ENCODE measurements at regions of chr6 and their contacts with region 1.

Region 1: DNA sequence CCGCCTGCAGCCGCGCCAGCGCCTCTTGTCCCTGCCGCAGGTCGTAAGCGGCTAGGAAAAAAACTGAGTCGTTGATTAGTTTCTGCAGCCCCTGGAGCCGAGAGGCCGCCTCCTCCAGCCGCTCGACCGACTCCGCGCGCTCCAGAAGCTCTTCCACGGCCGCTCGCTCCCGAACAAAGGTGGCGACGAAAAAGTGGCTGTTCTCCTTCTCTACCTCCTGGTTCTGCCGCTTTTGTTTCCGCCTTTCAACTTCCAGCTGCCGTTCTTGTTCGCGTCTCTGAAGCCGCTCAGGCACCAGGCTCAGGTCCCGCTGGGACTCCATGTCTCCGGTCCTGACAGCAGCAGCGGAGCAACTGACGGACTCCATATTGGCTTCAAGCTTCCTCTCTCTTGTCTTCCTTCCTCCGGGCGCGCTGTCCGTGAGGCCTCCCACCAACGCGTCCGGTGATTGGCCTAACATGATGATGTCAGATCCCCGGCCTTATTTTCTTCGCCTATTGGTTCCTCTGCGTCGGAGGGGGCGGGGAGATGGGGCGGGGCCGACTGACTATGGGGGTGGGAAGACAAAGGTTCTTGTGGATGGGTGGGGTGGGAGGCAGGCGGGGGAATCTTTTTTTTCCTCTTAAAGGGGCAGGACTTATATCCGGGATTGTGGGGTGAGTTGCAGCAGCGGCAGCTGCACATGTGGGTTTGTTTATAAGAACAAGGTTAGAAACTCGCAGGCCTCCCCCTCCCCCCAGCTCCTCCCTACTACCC is at the start of gene TBCC:
- DNase-seq: peak; percentile 93
- ATAC-seq: peak; percentile 84
- H3K4me3 ChIP-seq: peak within 1 kb of the TSS; percentile 100
- H3K27ac ChIP-seq: peak within 1 kb of the TSS; percentile 98
- H3K4me1 ChIP-seq: peaks cover 10% of the 10 kb centered on the region
- H3K27me3 ChIP-seq: no peaks in the 10 kb centered on the region
- CTCF ChIP-seq: no peak
- EP300 ChIP-seq: no peak
- POLR2A ChIP-seq: peak; percentile 99
- RAD21 ChIP-seq: no peak
- polyA plus RNA-seq, gene TBCC: 2.5 to 6.3 TPM

Region 2: DNA sequence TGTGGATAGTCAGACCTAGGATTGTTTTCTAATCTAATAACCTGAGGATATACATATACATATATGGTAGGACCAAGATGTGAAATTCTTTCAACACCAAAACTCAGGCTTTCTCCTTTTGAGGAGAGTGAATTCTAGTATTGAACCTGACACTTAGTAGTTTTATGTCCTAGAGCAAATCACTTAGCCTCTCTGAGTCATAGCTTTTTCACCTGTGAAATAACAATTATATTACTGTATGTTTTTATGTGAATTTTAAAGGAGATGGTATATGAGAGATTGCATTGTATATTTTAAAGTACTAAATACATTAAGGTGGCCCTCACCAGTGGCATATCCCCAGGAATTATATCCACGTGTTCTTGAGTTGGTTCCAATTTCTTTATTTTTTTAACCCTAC is 1626.4 kb before region 1 on chr6:
- CTCF ChIA-PET with region 1: no interaction called
- POLR2A ChIA-PET with region 1: no interaction called
- RAD21 ChIA-PET with region 1: no interaction called
- SMC1A ChIA-PET with region 1: no interaction called
- in situ Hi-C with region 1: no loop called
- intact Hi-C with region 1: no loop called
- DNase-seq: no peak
- ATAC-seq: no peak
- H3K4me3 ChIP-seq: no peak overlapping the region
- H3K27ac ChIP-seq: no peak overlapping the region
- H3K4me1 ChIP-seq: no peaks in the 10 kb centered on the region
- H3K27me3 ChIP-seq: no peaks in the 10 kb centered on the region; a peak in 1 of 4 replicates
- CTCF ChIP-seq: no peak
- EP300 ChIP-seq: no peak
- POLR2A ChIP-seq: no peak
- RAD21 ChIP-seq: no peak

Region 3: DNA sequence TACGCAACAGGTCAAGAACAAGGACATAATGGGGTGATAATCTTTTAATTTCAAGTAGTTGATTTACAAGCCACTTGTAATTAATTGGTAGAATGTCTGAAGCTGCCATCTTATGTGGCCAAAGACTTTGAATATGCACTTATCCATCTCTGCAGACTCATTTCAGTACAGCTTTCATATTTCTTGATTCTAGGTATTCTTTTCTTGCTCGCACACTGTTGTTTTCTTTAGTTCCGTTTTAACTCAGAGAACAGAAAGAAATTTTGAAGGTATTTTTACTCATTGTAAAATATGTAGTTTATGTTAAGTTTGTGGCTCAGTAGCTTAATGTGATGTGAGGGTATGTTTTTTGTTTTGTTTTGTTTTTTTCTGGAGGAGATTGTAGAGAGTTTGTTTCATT is 108.2 kb before region 1 on chr6:
- CTCF ChIA-PET with region 1: no interaction called
- POLR2A ChIA-PET with region 1: no interaction called
- RAD21 ChIA-PET with region 1: no interaction called
- SMC1A ChIA-PET with region 1: no interaction called
- in situ Hi-C with region 1: no loop called
- intact Hi-C with region 1: no loop called
- DNase-seq: no peak
- ATAC-seq: no peak
- H3K4me3 ChIP-seq: no peak overlapping the region
- H3K27ac ChIP-seq: no peak overlapping the region; the same call in 1 of the 2 replicates
- H3K4me1 ChIP-seq: peaks cover 5% of the 10 kb centered on the region
- H3K27me3 ChIP-seq: no peaks in the 10 kb centered on the region
- CTCF ChIP-seq: no peak
- EP300 ChIP-seq: no peak
- POLR2A ChIP-seq: no peak
- RAD21 ChIP-seq: no peak

Region 4: GRCh38 chr6:42766141-42766670 is 20.3 kb after region 1 on chr6:
- CTCF ChIA-PET with region 1: interaction called, 25 read pairs
- POLR2A ChIA-PET with region 1: interaction called, 140 read pairs
- RAD21 ChIA-PET with region 1: interaction called, 227 read pairs
- SMC1A ChIA-PET with region 1: interaction called, 92 read pairs
- in situ Hi-C with region 1: no loop called
- intact Hi-C with region 1: loop called (anchors 1 kb)
- DNase-seq: no peak
- ATAC-seq: no peak
- H3K4me3 ChIP-seq: no peak overlapping the region
- H3K27ac ChIP-seq: no peak overlapping the region
- H3K4me1 ChIP-seq: peaks cover 7% of the 10 kb centered on the region
- H3K27me3 ChIP-seq: no peaks in the 10 kb centered on the region
- CTCF ChIP-seq: no peak
- EP300 ChIP-seq: no peak
- POLR2A ChIP-seq: no peak
- RAD21 ChIP-seq: no peak

Region 5: DNA sequence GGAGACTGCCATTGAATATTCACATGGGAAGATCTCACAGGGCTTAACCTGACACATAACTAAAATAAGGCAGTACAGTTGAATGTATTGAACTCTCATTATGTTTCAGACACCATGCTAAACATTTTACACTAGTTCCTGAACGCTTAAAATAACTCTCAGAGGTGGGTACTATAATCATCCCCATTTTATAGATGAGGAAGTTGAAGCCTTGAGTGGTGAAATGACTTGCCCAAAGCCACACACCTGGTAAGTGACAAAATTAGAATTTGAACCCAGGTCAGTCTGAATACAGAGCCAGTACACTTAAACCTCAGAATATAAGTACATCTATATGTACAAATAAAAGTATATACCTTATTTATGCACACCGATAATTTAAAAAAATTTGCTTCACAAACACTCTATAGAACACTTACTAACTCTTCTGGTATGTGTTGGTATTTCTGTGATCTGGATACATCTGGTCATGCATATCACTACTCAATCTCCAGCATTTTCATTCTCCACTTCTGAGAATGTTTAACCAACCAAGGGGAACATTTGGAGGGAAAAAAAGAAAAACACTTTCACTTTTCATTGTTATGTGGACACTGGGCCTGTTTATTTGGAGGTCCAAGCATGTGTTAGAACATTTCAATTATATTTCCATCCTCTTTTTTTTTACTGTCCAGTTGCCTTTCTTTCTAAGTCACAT is 31.4 kb after region 1 on chr6:
- CTCF ChIA-PET with region 1: interaction called, 4 read pairs
- POLR2A ChIA-PET with region 1: interaction called, 140 read pairs
- RAD21 ChIA-PET with region 1: interaction called, 227 read pairs
- SMC1A ChIA-PET with region 1: interaction called, 92 read pairs
- in situ Hi-C with region 1: no loop called
- intact Hi-C with region 1: no loop called
- DNase-seq: peak; percentile 83
- ATAC-seq: peak; percentile 63
- H3K4me3 ChIP-seq: 0 out of 2 replicates have a peak overlapping the region, but pooled peaks have one; percentile 18
- H3K27ac ChIP-seq: peak overlapping the region; percentile 99
- H3K4me1 ChIP-seq: peaks cover 71% of the 10 kb centered on the region
- H3K27me3 ChIP-seq: no peaks in the 10 kb centered on the region
- CTCF ChIP-seq: no peak
- EP300 ChIP-seq: peak in 1 of 2 experiments; percentile 41; a peak in 2 of 4 replicates
- POLR2A ChIP-seq: no peak
- RAD21 ChIP-seq: no peak

Region 6: DNA sequence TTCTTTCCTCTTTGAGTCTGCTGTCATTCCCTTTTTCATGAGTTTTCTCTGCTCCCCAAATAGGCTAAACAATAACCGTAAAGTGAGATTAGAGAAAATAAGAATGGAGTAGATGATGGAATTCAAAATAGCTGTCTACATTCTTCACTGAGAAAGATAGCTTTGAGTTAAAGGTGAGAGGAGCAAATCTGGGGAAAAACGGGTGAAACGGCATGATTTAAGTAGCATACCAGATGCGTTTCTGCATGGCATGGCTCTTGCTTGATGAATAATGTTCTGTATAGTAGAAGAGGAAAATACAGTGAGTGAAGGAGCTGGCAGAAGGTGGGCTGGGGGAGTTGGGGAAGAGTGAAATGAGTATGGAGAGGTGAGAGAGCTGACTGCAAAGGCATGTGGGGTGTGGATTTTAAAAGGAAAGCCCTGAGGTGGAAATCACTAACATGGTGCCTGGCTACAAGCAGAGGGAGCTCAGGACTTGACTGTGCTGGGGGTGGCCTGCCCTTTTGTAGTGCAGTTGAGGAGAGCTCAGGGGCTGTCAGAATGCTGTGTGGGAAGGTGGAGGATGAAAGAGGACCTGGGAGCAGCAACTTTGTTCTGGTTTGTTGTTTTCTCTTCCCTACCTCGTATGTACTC is 44.8 kb after region 1 on chr6:
- CTCF ChIA-PET with region 1: interaction called, 11 read pairs
- POLR2A ChIA-PET with region 1: interaction called, 43 read pairs
- RAD21 ChIA-PET with region 1: interaction called, 8 read pairs
- SMC1A ChIA-PET with region 1: interaction called, 10 read pairs
- in situ Hi-C with region 1: no loop called
- intact Hi-C with region 1: no loop called
- DNase-seq: no peak
- ATAC-seq: peak; percentile 35
- H3K4me3 ChIP-seq: no peak overlapping the region
- H3K27ac ChIP-seq: peak overlapping the region; percentile 9
- H3K4me1 ChIP-seq: peaks cover 27% of the 10 kb centered on the region
- H3K27me3 ChIP-seq: no peaks in the 10 kb centered on the region
- CTCF ChIP-seq: no peak; a peak in 1 of 6 replicates
- EP300 ChIP-seq: no peak
- POLR2A ChIP-seq: no peak
- RAD21 ChIP-seq: no peak

Region 7: GRCh38 chr6:42890311-42891198 is 144.7 kb after region 1 on chr6:
- CTCF ChIA-PET with region 1: interaction called, 3 read pairs
- POLR2A ChIA-PET with region 1: interaction called, 4 read pairs
- RAD21 ChIA-PET with region 1: interaction called, 4 read pairs
- SMC1A ChIA-PET with region 1: interaction called, 3 read pairs
- in situ Hi-C with region 1: no loop called
- intact Hi-C with region 1: loop called (anchors 2 kb)
- DNase-seq: peak; percentile 89
- ATAC-seq: peak; percentile 95
- H3K4me3 ChIP-seq: peak overlapping the region; percentile 85
- H3K27ac ChIP-seq: peak overlapping the region; percentile 88
- H3K4me1 ChIP-seq: peaks cover 15% of the 10 kb centered on the region
- H3K27me3 ChIP-seq: no peaks in the 10 kb centered on the region
- CTCF ChIP-seq: no peak
- EP300 ChIP-seq: peak in 1 of 2 experiments; percentile 27; a peak in 1 of 4 replicates
- POLR2A ChIP-seq: peak; percentile 98
- RAD21 ChIP-seq: no peak